Calu3 (cell line): ENCODE measurements at regions of chr1 and their contacts with region 1.

Region 1: DNA sequence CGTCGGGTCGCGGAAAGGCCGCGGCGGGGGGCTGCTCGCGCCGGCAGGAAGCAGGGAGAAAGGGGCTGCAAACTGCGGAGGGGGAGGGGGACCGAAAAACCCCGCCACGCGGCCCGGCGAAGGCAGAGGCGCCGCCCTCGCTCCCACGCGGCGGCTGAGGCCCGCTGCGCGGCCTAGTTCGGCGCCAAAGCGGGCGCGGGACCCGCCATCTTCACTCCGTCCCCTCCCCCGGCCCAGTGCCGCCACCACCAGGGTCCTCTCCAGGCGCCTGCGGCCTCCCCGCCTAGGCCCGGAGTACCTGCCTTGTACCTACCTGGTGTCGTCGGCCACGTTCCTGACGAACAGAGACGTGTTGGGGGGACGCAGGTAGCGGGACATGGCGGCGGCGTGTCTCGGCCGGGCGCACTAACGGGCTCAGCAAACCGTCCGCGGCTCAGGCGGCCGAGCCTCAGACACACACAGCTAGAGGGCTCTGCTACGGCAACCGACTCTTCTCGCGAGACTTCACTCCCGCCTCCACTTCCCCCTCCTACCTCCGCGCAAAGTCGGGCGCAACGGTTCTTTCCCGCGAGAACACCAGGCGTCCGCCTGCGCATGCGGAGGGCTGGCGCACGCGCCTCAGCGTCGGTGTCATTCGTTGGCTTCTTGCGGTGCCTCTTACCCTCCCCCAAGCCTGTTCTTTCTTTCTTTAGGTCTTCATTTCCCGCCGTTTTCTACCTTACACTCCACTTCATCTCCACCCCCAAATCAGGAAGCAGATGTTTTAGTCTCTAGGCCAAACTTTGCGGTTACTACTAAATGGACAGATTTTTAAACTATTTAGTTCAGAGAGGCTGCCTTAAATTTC is at the start of gene SRSF10:
- DNase-seq: peak; percentile 93
- H3K4me3 Mint-ChIP-seq: peak within 1 kb of the TSS; percentile 93
- H3K27ac Mint-ChIP-seq: peak within 1 kb of the TSS; percentile 94
- H3K4me1 Mint-ChIP-seq: peaks cover 28% of the 10 kb centered on the region
- H3K27me3 Mint-ChIP-seq: no peaks in the 10 kb centered on the region
- CTCF ChIP-seq: no peak
- total RNA-seq, gene SRSF10: 113 and 121 TPM in 2 replicates

Region 2: GRCh38 chr1:24018611-24019580 is 38.8 kb after region 1 on chr1:
- CTCF ChIA-PET with region 1: interaction called, 3 read pairs
- intact Hi-C with region 1: loop called (anchors 2 kb)
- DNase-seq: peak; percentile 93
- H3K4me3 Mint-ChIP-seq: no peak overlapping the region
- H3K27ac Mint-ChIP-seq: peak overlapping the region; percentile 83
- H3K4me1 Mint-ChIP-seq: peaks cover 38% of the 10 kb centered on the region
- H3K27me3 Mint-ChIP-seq: no peaks in the 10 kb centered on the region
- CTCF ChIP-seq: no peak